Activated B cell treated with CpG ODN at 0.5 μM for 24 hours (primary cell): ENCODE measurements at regions of chr18 and their contacts with region 1.

Region 1: GRCh38 chr18:2606335-2606734 is 35.0 kb downstream of the NDC80 start:
- DNase-seq: no peak
- ATAC-seq: no peak
- H3K4me3 Mint-ChIP-seq: peak overlapping the region; percentile 24
- H3K27ac Mint-ChIP-seq: peak overlapping the region; percentile 83
- H3K4me1 Mint-ChIP-seq: peaks cover 31% of the 10 kb centered on the region
- H3K27me3 Mint-ChIP-seq: no peaks in the 10 kb centered on the region
- CTCF ChIP-seq: no peak

Region 2: DNA sequence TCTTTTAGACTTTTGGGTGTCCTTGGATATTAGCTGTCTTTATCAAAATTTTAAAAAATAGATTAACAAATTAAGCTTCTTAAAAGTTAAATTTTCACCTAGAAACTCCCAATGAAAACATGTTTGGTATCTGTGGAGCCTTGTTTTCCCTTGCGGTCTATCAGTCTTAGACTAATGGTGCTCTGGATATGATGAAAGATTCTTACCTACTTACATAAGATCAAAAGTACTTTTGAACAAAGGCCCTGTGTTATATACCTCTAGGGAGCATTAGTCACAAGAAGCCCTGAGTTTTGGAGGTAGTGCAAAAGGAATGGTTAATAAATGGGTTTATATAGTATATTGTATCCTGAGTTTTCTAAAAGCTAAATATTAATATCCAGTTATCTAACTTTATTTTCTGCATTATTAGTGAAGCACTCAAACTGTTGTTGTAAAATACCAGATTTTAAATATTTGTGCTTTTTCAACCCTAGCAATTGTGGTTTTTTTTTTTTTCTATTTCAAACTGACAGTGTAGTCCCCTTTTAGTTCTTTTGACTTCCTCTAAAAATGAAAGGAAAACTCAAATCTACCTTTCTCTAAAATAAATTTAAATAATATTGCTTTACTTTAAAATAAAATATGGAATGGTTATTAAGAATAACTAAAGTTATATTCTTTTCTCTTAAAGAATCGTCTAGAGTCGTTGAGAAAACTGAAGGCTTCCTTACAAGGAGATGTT is 16.8 kb before region 1 on chr18:
- CTCF ChIA-PET with region 1: interaction called, 3 read pairs
- POLR2A ChIA-PET with region 1: interaction called, 7 read pairs
- intact Hi-C with region 1: loop called (anchors 2 kb)
- DNase-seq: no peak
- ATAC-seq: peak; percentile 80
- H3K4me3 Mint-ChIP-seq: peak overlapping the region; percentile 46
- H3K27ac Mint-ChIP-seq: peak overlapping the region; percentile 74
- H3K4me1 Mint-ChIP-seq: peaks cover 22% of the 10 kb centered on the region
- H3K27me3 Mint-ChIP-seq: no peaks in the 10 kb centered on the region
- CTCF ChIP-seq: no peak

Region 3: DNA sequence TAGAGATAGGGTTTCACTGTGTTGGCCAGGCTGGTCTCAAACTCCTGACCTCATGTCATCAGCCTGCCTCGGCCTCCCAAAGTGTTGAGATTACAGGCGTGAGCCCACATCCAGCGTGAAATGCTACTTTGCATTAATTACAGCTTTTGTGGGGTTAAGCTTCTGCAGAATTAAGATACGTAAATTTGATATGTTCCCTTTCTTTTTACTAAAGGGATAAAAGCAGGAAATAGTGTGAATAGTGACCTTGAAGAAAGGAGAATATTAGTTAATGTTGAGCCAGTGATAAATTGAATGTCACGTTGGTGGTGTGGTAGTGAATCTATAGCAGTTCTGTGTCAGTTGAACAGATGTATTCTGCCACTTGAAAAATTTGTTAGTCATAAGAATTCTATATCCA is 66.1 kb after region 1 on chr18:
- CTCF ChIA-PET with region 1: no interaction called
- POLR2A ChIA-PET with region 1: no interaction called
- intact Hi-C with region 1: no loop called
- DNase-seq: no peak
- ATAC-seq: no peak
- H3K4me3 Mint-ChIP-seq: no peak overlapping the region
- H3K27ac Mint-ChIP-seq: no peak overlapping the region
- H3K4me1 Mint-ChIP-seq: peaks cover 8% of the 10 kb centered on the region
- H3K27me3 Mint-ChIP-seq: no peaks in the 10 kb centered on the region
- CTCF ChIP-seq: no peak